Activated CD8-positive, alpha-beta T cell treated with anti-CD3 and anti-CD28 coated beads, Interleukin-2, amount 10 ng/mL, durations not matched to agents 7 days and 5 days (primary cell): ENCODE measurements at regions of chr17 and their contacts with region 1.

Region 1: GRCh38 chr17:49031965-49032928 is 35.1 kb downstream of the IGF2BP1 start:
- DNase-seq: peak; percentile 64
- ATAC-seq: peak; percentile 82
- H3K4me3 Mint-ChIP-seq: no peak overlapping the region
- H3K27ac Mint-ChIP-seq: no peak overlapping the region
- H3K4me1 Mint-ChIP-seq: no peaks in the 10 kb centered on the region
- H3K27me3 Mint-ChIP-seq: peaks cover 3% of the 10 kb centered on the region

Region 2: GRCh38 chr17:48804925-48805411 is 227.3 kb before region 1 on chr17:
- CTCF ChIA-PET with region 1: interaction called, 11 read pairs
- POLR2A ChIA-PET with region 1: no interaction called
- DNase-seq: peak; percentile 78
- ATAC-seq: peak; percentile 94
- H3K4me3 Mint-ChIP-seq: no peak overlapping the region
- H3K27ac Mint-ChIP-seq: no peak overlapping the region
- H3K4me1 Mint-ChIP-seq: no peaks in the 10 kb centered on the region
- H3K27me3 Mint-ChIP-seq: peaks cover 18% of the 10 kb centered on the region

Region 3: GRCh38 chr17:48816774-48817590 is 215.3 kb before region 1 on chr17 and contains the start of gene TTLL6:
- CTCF ChIA-PET with region 1: interaction called, 18 read pairs
- POLR2A ChIA-PET with region 1: no interaction called
- DNase-seq: peak; percentile 88
- ATAC-seq: peak; percentile 98
- H3K4me3 Mint-ChIP-seq: peak within 1 kb of the TSS; percentile 75
- H3K27ac Mint-ChIP-seq: peak within 1 kb of the TSS; percentile 52
- H3K4me1 Mint-ChIP-seq: peaks cover 19% of the 10 kb centered on the region
- H3K27me3 Mint-ChIP-seq: peaks cover 52% of the 10 kb centered on the region
- total RNA-seq, gene TTLL6: not detected

Region 4: DNA sequence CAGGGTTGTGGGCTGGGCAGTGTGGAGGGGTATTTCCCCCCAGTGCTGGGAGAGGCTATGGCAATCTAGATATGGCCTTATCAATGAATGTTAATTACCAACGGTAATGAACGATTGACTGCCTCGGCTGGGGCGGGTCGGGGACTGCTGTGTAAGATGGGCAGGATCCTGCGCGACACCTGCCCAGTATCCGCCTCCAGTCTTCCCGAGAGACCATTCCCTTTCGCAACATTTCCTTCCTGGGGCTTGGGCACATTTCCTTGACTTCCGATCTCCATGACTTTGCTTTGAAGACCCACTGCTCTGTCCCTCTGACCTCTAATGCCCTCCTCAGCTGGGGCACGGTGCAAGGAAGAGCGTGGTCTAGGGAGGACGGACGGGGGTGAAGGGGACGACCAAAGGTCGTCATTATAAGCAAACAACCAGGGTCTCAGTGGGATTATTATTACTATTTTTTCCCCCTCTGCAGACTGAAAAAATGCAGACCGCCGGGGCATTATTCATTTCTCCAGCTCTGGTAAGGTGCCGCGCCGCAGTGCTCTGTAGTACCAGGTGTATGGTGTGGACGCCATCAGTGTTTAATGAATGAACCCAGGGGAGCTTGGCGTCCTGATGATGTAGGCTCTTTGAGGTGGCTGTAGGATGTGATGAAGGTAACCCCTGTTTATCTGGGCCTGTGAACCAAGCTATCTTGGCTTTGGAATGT is 139.2 kb before region 1 on chr17:
- CTCF ChIA-PET with region 1: interaction called, 11 read pairs
- POLR2A ChIA-PET with region 1: no interaction called
- DNase-seq: peak; percentile 28
- ATAC-seq: no peak
- H3K4me3 Mint-ChIP-seq: peak overlapping the region; percentile 89
- H3K27ac Mint-ChIP-seq: peak overlapping the region; percentile 88
- H3K4me1 Mint-ChIP-seq: peaks cover 38% of the 10 kb centered on the region
- H3K27me3 Mint-ChIP-seq: no peaks in the 10 kb centered on the region

Region 5: DNA sequence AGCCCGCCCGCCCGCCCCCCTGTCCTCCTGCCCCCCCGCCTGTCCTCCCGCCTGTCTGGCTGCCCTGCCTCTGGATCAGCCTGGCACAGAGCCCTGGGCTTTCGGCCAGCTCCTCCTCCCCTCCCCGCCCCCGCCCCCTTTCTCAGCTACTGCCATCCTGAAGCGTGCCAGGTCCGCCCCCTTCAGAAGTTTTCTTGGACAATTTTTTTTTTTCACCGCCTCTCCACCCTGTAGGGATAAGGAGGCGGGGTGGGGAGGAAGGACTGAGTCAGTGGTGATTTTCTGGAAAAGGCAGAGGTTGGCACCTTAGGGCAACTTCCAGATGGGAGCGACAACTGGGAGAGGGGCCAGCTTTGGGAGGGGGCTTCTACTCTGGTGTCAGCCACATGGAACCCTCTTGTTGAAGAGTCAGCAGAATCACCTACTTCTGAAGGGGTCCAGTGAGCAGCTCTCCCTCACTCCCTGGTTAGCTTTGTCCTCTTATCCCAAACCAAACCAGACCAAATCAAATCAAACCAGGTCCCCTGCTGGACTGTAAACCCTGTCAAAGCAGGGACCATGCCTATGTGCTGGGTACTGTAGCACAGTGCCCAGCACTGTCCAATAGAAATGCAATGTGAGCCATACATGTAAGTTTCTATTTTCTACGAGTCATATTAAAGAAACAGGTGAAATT is 15.3 kb before region 1 on chr17:
- CTCF ChIA-PET with region 1: interaction called, 14 read pairs
- POLR2A ChIA-PET with region 1: no interaction called
- DNase-seq: no peak
- ATAC-seq: no peak
- H3K4me3 Mint-ChIP-seq: no peak overlapping the region
- H3K27ac Mint-ChIP-seq: no peak overlapping the region
- H3K4me1 Mint-ChIP-seq: no peaks in the 10 kb centered on the region
- H3K27me3 Mint-ChIP-seq: peaks cover 47% of the 10 kb centered on the region

Region 6: GRCh38 chr17:49051262-49051661 is 19.0 kb after region 1 on chr17:
- CTCF ChIA-PET with region 1: interaction called, 11 read pairs
- POLR2A ChIA-PET with region 1: no interaction called
- DNase-seq: no peak
- ATAC-seq: no peak
- H3K4me3 Mint-ChIP-seq: no peak overlapping the region
- H3K27ac Mint-ChIP-seq: no peak overlapping the region
- H3K4me1 Mint-ChIP-seq: peaks cover 3% of the 10 kb centered on the region
- H3K27me3 Mint-ChIP-seq: peaks cover 6% of the 10 kb centered on the region

Region 7: GRCh38 chr17:49404361-49404760 is 372.1 kb after region 1 on chr17:
- CTCF ChIA-PET with region 1: no interaction called
- POLR2A ChIA-PET with region 1: no interaction called
- DNase-seq: peak; percentile 73
- ATAC-seq: peak; percentile 57
- H3K4me3 Mint-ChIP-seq: peak overlapping the region; percentile 6
- H3K27ac Mint-ChIP-seq: peak overlapping the region; percentile 90
- H3K4me1 Mint-ChIP-seq: peaks cover 61% of the 10 kb centered on the region
- H3K27me3 Mint-ChIP-seq: no peaks in the 10 kb centered on the region

Region 8: DNA sequence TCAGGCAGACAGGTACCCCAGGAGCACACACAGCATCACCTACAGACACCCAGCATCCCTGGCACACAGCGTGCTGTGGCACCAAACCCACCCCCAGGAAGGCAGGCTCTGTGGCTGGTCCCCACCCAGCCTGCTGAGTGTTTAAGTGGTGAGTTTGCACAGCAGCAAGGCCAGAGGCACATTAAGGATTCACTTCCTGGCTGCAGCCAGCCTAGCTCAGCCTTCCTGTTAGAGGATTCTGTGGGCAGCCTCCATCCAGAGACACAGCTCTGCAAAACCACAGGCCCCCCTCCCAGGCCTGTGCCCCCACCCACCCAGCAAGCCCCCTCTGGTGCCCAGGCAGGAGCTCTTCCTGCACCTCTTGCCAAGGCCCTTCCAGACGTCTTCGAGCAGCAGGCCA is 418.5 kb after region 1 on chr17:
- CTCF ChIA-PET with region 1: no interaction called
- POLR2A ChIA-PET with region 1: no interaction called
- DNase-seq: peak; percentile 24
- ATAC-seq: peak; percentile 49
- H3K4me3 Mint-ChIP-seq: no peak overlapping the region
- H3K27ac Mint-ChIP-seq: peak overlapping the region; percentile 31
- H3K4me1 Mint-ChIP-seq: peaks cover 16% of the 10 kb centered on the region
- H3K27me3 Mint-ChIP-seq: peaks cover 9% of the 10 kb centered on the region